K562 (cell line): ENCODE measurements at regions of chr17 and their contacts with region 1.

Region 1: DNA sequence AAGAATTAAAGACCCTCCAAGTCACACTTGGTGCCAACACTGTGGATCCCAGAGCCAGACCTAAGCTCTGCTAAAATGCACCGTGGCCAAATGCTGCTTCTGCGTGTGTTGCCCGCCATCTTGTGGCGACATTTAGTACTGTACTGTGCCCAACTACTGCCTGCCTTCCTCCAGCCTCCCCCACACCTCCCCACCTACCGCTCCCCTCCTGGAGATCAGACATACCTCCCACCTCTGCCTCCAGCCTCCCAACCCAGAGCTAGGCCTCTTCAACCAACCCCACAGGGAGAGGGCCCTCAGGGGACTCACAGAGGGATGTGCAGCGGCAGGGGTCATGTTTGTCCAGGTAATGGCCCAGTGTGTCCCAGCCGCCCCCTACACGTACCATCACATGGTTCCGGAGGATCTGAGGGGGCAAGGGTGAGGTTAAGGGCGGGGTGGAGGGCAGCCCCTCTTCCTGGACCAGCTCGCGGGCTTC is 5.5 kb downstream of the GAS2L2 start:
- DNase-seq: peak; percentile 78 to 87 (median 83)
- ATAC-seq: peak; percentile 89
- H3K4me3 ChIP-seq: no peak overlapping the region
- H3K27ac ChIP-seq: no peak overlapping the region
- H3K4me1 ChIP-seq: peaks cover 11 to 19% of the 10 kb centered on the region in 2 experiments; a peak in 4 of 5 replicates
- H3K27me3 ChIP-seq: peaks cover 10 to 67% of the 10 kb centered on the region in 2 experiments; a peak in 4 of 5 replicates
- CTCF ChIP-seq: peak; percentile 86 to 90 (median 88)
- EP300 ChIP-seq: no peak
- POLR2A ChIP-seq: no peak
- RAD21 ChIP-seq: peak; percentile 74 to 93

Region 2: GRCh38 chr17:35141681-35142466 is 605.7 kb before region 1 on chr17 and contains the start of gene NLE1:
- CTCF ChIA-PET with region 1: no interaction called
- POLR2A ChIA-PET with region 1: no interaction called
- in situ Hi-C with region 1: loop called (anchors 10 kb)
- intact Hi-C with region 1: no loop called
- DNase-seq: peak; percentile 88 to 95 (median 92)
- ATAC-seq: peak; percentile 94
- H3K4me3 ChIP-seq: peak within 1 kb of the TSS; percentile 91
- H3K27ac ChIP-seq: peak within 1 kb of the TSS; percentile 70
- H3K4me1 ChIP-seq: peaks cover 0 to 15% of the 10 kb centered on the region in 2 experiments; a peak in 3 of 5 replicates
- H3K27me3 ChIP-seq: 0 out of 5 replicates have a peak, but pooled peaks cover 0 to 2% of the 10 kb centered on the region in 2 experiments
- CTCF ChIP-seq: peak; percentile 86 to 91 (median 90)
- EP300 ChIP-seq: no peak
- POLR2A ChIP-seq: peak; percentile 84
- RAD21 ChIP-seq: peak in 1 of 2 experiments; percentile 32; a peak in 2 of 4 replicates
- polyA plus RNA-seq, gene NLE1: 3.8 to 7.0 TPM

Region 3: DNA sequence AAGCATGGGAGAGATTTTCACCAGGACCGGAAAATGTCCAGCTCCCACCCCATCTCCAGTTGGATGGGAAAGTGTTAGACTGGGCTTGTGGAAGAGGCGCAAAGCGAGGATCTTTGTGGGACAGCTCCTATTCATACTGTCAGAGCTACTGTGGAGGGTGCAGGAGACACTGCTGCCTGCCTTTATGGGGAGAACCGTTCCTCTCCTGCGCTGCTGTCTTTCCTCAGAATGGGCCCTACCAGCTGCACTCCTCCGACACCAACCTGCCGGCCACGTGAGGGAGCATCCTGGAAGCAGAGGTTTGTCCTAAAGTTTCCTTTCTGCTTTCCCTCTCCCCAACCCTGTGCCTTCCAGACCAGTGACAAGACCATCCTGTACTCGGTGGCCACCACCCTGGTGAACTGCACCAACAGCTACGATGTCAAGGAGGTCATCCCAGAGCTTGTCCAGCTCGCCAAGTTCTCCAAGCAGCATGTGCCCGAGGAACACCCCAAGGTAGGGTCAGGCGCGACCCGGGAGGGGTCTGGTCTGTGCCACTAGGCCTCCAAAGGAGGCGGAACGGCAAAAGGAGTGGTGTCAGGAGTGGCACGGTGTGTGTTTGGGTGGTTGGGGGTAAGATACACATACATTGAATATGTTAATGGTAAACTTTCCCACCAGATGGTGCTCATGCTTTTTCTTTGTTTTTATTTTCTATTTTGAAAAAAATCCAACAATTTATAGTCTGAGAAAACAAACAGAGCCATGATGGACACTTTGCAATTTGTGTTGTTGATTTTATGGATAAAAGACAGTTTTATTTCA is 576.4 kb before region 1 on chr17:
- CTCF ChIA-PET with region 1: interaction called, 5 read pairs
- POLR2A ChIA-PET with region 1: no interaction called
- in situ Hi-C with region 1: loop called (anchors 10 kb)
- intact Hi-C with region 1: loop called (anchors 2 kb)
- DNase-seq: no peak
- ATAC-seq: peak; percentile 57
- H3K4me3 ChIP-seq: no peak overlapping the region
- H3K27ac ChIP-seq: no peak overlapping the region
- H3K4me1 ChIP-seq: no peaks in the 10 kb centered on the region
- H3K27me3 ChIP-seq: peaks cover 14 to 65% of the 10 kb centered on the region in 2 experiments
- CTCF ChIP-seq: peak in 2 of 3 experiments; percentile 31 to 40; a peak in 2 of 6 replicates
- EP300 ChIP-seq: no peak
- POLR2A ChIP-seq: no peak
- RAD21 ChIP-seq: peak in 1 of 2 experiments; percentile 62; a peak in 2 of 4 replicates

Region 4: GRCh38 chr17:35537601-35538141 is 209.9 kb before region 1 on chr17 and contains the start of gene SLFN12L:
- CTCF ChIA-PET with region 1: no interaction called
- POLR2A ChIA-PET with region 1: no interaction called
- in situ Hi-C with region 1: no loop called
- intact Hi-C with region 1: loop called (anchors 5 kb)
- DNase-seq: peak in 2 of 4 experiments; percentile 26 to 55
- ATAC-seq: no peak; the same call in 2 of the 3 replicates
- H3K4me3 ChIP-seq: no peak within 1 kb of the TSS
- H3K27ac ChIP-seq: peak within 1 kb of the TSS; percentile 14; the same call in 1 of the 3 replicates
- H3K4me1 ChIP-seq: peaks cover 10 to 36% of the 10 kb centered on the region in 2 experiments; a peak in 3 of 5 replicates
- H3K27me3 ChIP-seq: no peaks in the 10 kb centered on the region
- CTCF ChIP-seq: no peak
- EP300 ChIP-seq: no peak
- POLR2A ChIP-seq: no peak
- RAD21 ChIP-seq: no peak
- polyA plus RNA-seq, gene SLFN12L: 0.04 TPM in 1 of 2 experiments, not detected in the other

Region 5: DNA sequence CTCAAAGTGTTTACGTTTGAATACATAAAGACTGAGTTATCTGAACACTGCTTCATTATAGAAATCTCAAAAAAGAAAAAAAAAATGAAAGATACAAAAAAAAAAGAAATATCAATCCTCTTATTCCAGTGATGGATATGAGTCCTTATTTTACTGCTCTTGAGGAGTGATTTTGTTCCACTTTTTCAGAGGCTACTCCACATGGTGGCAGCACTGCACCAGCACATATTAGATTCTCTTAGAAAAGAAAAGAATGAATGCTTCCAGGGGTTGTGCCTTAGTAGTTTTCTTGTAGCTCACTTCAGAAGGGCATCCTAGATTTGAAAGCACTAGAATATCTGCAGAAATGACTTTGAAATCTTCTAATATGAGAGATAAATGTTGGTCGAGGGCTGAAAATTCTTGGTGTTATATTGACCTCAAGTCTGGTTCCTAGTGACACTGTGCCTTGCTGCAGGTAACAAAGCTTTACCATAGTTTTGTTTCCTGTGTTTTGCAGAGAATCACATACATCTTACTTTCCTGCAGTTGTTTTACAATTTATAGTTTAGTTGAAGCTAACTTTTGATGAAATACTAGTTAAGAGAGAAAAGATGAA is 134.6 kb before region 1 on chr17:
- CTCF ChIA-PET with region 1: interaction called, 9 read pairs
- POLR2A ChIA-PET with region 1: interaction called, 5 read pairs
- in situ Hi-C with region 1: no loop called
- intact Hi-C with region 1: loop called (anchors 2 kb)
- DNase-seq: peak in 3 of 4 experiments; percentile 18 to 56 (median 28)
- ATAC-seq: peak; percentile 84
- H3K4me3 ChIP-seq: no peak overlapping the region
- H3K27ac ChIP-seq: no peak overlapping the region
- H3K4me1 ChIP-seq: no peaks in the 10 kb centered on the region
- H3K27me3 ChIP-seq: no peaks in the 10 kb centered on the region
- CTCF ChIP-seq: peak; percentile 29 to 61 (median 58); a peak in 4 of 6 replicates
- EP300 ChIP-seq: no peak
- POLR2A ChIP-seq: no peak
- RAD21 ChIP-seq: peak; percentile 31 to 58; a peak in 3 of 4 replicates